ENCODE measurements at regions of chr19 and their contacts with region 1.

Region 1: DNA sequence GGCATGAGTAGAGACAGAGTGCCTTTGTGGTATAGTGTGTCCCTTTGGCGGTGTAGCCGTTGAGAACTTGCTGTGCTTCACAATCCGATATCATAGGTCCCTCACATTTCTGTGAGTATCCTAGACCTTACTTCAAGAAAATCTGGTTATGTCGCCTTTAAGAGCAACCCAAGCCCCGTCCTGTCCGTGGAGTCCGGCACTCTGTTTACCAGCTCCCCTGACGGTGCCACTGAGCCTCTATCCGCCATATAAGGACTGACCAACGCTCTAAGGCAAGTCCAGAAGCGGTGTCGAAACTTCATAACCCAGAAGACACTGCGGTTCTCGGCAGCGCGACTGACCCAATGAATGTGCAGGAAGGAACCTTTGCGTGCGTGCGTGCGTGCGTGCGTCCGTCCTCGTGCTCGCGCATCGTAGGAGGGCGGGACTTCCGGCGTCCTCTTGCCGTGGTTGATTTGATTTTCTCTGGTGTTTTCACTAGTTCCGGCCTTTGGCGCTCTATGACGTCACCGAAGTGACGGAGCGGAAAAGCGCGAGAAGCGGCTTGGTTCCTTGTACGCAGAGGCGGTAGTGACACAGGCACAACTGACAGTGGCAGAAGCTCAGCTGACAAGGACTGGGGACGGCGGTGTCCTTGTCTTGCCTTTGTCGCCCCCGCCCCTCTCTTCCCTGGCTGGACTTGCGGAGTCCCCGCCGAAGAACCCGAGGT is at the starts of genes TRAPPC2B and ZNF547:
- DNase-seq: peak; percentile 99
- ATAC-seq: peak; percentile 98
- H3K4me3 Mint-ChIP-seq: peak within 1 kb of the TSS; percentile 86
- H3K27ac Mint-ChIP-seq: peak within 1 kb of the TSS; percentile 94
- H3K4me1 Mint-ChIP-seq: peaks cover 13% of the 10 kb centered on the region
- H3K27me3 Mint-ChIP-seq: no peaks in the 10 kb centered on the region
- total RNA-seq, gene TRAPPC2B: 3.2 to 6.1 TPM
- total RNA-seq, gene ZNF547: 1.5 to 1.7 TPM

Region 2: GRCh38 chr19:57240311-57241090 is 122.7 kb before region 1 on chr19 and contains the start of gene ZNF805:
- CTCF ChIA-PET with region 1: no interaction called
- POLR2A ChIA-PET with region 1: interaction called, 3 read pairs
- intact Hi-C with region 1: loop called (anchors 1 kb)
- DNase-seq: peak; percentile 97
- ATAC-seq: peak; percentile 95
- H3K4me3 Mint-ChIP-seq: peak within 1 kb of the TSS; percentile 80
- H3K27ac Mint-ChIP-seq: peak within 1 kb of the TSS; percentile 92
- H3K4me1 Mint-ChIP-seq: peaks cover 23% of the 10 kb centered on the region
- H3K27me3 Mint-ChIP-seq: no peaks in the 10 kb centered on the region
- total RNA-seq, gene ZNF805: 6.4 to 7.1 TPM

Region 3: DNA sequence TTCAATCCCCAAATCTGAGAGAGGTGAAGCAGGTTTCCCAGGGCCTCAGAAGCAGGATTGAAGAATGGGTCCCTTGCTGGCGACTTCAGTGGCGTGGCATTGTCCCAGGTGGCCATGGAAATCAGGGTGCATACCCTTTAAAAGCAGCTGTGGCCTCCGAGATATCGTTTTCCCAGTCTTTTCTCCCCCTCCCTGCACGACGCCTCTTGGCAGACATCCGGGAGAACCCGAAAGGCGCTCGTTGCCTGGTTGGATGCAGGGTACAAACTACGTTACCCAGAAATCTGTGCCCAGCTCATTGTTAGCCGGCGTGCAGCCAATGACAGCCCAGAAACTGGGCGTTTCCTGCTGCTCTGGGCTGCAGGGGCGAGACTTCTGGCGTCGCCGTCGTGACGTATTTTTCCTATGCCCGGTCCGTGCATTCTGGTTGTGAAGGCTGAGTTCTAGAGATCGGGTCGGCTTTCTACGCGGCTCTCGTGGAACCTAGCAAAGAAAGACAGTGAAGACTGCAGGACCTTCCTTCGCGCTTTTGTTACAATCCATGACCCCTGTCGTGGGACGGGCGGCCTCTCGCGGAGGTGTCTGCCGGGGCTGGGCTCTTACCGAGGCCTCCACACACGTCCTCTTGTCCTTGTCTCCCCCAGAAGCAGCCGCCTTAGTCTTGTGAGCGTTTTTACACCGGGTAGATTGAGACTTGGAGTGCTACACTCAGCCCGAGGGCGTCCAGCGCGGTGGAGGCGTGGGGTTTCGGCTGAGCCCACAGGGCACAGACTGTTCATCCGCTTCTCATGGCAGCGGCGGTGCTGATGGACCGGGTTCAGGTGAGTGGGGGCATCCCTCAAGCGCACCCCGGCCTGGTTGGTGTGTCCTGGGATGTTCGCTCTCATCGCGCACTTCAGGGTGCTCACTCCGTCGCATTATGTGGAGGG is 12.0 kb before region 1 on chr19 and contains the start of gene ZNF304:
- CTCF ChIA-PET with region 1: interaction called, 3 read pairs
- POLR2A ChIA-PET with region 1: no interaction called
- intact Hi-C with region 1: loop called (anchors 1 kb)
- DNase-seq: peak; percentile 94
- ATAC-seq: peak; percentile 100
- H3K4me3 Mint-ChIP-seq: peak within 1 kb of the TSS; percentile 96
- H3K27ac Mint-ChIP-seq: peak within 1 kb of the TSS; percentile 90
- H3K4me1 Mint-ChIP-seq: peaks cover 25% of the 10 kb centered on the region
- H3K27me3 Mint-ChIP-seq: peaks cover 4% of the 10 kb centered on the region
- total RNA-seq, gene ZNF304: 6.2 TPM

Region 4: GRCh38 chr19:57410877-57411671 is 47.9 kb after region 1 on chr19 and contains the start of gene ZNF17:
- CTCF ChIA-PET with region 1: interaction called, 3 read pairs
- POLR2A ChIA-PET with region 1: no interaction called
- intact Hi-C with region 1: loop called in 1 of 2 experiments (anchors 1 kb)
- DNase-seq: peak; percentile 96
- ATAC-seq: peak; percentile 100
- H3K4me3 Mint-ChIP-seq: peak within 1 kb of the TSS; percentile 93
- H3K27ac Mint-ChIP-seq: peak within 1 kb of the TSS; percentile 84
- H3K4me1 Mint-ChIP-seq: peaks cover 14% of the 10 kb centered on the region
- H3K27me3 Mint-ChIP-seq: no peaks in the 10 kb centered on the region
- total RNA-seq, gene ZNF17: 6.4 to 8.3 TPM

Region 5: DNA sequence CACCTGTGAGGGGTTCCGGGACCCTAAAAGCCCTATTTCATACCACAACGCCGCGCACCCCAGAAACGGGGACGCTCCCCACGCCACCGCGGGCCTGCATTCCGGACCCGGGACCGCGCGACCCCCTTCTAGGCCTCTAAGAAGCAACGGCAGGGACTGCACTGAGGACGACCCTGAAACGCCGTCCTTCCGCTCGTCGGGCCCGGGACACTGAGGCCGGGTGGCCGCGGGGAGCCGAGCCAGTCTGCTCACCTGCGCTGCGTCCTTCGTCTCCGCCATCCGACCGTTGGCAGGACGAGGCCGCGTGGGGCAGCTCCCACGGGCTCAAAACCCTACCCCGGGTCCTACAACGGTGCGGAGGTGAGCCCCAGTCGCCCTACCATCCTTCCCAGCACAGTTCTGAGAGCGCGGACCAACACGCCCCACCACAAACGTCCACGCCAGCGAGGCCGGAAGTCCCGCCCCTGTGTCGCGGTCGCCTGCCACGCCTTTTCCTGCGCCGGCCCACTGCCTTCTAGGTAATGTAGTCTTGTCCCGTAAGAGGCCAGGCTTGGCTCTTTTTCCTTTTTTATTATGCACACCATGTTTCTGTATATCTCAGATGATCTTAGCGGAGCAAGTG is 196.4 kb after region 1 on chr19 and contains the start of gene ZNF550:
- CTCF ChIA-PET with region 1: no interaction called
- POLR2A ChIA-PET with region 1: no interaction called
- intact Hi-C with region 1: loop called in 1 of 2 experiments (anchors 1 kb)
- DNase-seq: peak; percentile 93
- ATAC-seq: peak; percentile 97
- H3K4me3 Mint-ChIP-seq: peak within 1 kb of the TSS; percentile 98
- H3K27ac Mint-ChIP-seq: peak within 1 kb of the TSS; percentile 93
- H3K4me1 Mint-ChIP-seq: peaks cover 22% of the 10 kb centered on the region
- H3K27me3 Mint-ChIP-seq: no peaks in the 10 kb centered on the region
- total RNA-seq, gene ZNF550: 11.8 to 11.9 TPM

Region 6: GRCh38 chr19:57914531-57914930 is 551.4 kb after region 1 on chr19:
- CTCF ChIA-PET with region 1: no interaction called
- POLR2A ChIA-PET with region 1: no interaction called
- intact Hi-C with region 1: loop called in 1 of 2 experiments (anchors 1 kb)
- DNase-seq: no peak
- ATAC-seq: no peak
- H3K4me3 Mint-ChIP-seq: no peak overlapping the region
- H3K27ac Mint-ChIP-seq: no peak overlapping the region
- H3K4me1 Mint-ChIP-seq: peaks cover 27% of the 10 kb centered on the region
- H3K27me3 Mint-ChIP-seq: no peaks in the 10 kb centered on the region

Region 7: GRCh38 chr19:58097781-58098681 is 734.9 kb after region 1 on chr19 and contains the start of gene ZSCAN18:
- CTCF ChIA-PET with region 1: no interaction called
- POLR2A ChIA-PET with region 1: no interaction called
- intact Hi-C with region 1: loop called in 1 of 2 experiments (anchors 1 kb)
- DNase-seq: peak; percentile 97
- ATAC-seq: peak; percentile 99
- H3K4me3 Mint-ChIP-seq: peak within 1 kb of the TSS; percentile 82
- H3K27ac Mint-ChIP-seq: peak within 1 kb of the TSS; percentile 97
- H3K4me1 Mint-ChIP-seq: peaks cover 13% of the 10 kb centered on the region
- H3K27me3 Mint-ChIP-seq: no peaks in the 10 kb centered on the region
- total RNA-seq, gene ZSCAN18: 23.1 to 29.2 TPM